Caki2 (cell line): ENCODE measurements at regions of chr22 and their contacts with region 1.

Region 1: DNA sequence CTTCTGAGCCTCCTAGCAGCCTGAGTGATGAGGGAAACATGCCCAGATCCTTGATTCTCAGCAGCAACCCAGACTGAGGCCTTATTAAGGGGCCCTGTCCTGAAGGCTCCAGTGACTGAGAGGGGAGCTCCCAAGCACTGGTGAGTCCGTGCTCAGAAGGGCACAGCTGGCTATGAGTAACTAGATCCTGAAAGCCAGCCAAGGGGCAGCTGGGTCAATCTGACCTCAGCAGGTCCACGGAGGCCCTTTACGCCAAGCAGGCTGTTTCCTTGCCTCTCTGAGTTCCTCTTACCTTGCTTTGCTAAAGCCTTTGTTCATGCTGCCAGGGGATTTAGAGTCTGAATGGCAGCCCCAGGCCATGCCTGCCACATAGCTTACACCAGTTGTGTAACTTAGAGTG is 19.3 kb upstream of the MIEF1 start:
- DNase-seq: no peak

Region 2: DNA sequence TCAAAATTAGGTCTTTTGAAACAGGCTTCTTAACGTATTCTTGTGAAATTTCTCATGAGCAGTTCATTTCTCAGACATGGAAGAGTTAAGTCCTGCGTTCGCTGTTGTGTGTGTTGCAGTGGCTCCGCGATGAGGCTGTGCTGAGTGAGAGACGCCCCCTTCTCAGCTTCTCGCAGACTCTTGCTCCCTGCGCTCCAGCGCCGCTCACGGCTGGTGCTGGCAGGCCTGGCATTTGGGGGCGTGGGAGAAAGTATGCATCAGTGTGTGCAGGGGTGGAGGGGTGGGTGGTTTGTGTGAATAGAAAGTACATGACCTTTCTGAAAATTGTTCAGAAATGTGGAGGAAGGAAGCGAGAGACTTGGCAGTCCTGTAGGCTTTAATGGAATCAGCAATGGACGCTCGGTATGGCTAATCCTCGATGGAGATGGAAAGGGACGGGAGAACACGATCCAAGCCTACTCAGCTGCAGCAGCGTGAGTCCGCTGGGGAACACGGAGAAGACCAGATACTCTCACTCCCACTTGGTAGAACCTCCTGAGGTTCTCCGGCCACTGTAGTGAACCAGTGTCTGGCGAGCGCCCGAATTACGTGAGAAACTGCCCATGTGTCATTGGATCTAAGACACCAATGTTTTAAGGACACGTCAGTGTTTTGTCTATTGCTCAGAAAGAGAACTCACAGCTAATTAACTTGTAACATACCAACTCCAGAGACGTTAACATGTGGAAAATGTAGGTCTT is 77.3 kb before region 1 on chr22:
- in situ Hi-C with region 1: loop called (anchors 10 kb)
- DNase-seq: no peak

Region 3: DNA sequence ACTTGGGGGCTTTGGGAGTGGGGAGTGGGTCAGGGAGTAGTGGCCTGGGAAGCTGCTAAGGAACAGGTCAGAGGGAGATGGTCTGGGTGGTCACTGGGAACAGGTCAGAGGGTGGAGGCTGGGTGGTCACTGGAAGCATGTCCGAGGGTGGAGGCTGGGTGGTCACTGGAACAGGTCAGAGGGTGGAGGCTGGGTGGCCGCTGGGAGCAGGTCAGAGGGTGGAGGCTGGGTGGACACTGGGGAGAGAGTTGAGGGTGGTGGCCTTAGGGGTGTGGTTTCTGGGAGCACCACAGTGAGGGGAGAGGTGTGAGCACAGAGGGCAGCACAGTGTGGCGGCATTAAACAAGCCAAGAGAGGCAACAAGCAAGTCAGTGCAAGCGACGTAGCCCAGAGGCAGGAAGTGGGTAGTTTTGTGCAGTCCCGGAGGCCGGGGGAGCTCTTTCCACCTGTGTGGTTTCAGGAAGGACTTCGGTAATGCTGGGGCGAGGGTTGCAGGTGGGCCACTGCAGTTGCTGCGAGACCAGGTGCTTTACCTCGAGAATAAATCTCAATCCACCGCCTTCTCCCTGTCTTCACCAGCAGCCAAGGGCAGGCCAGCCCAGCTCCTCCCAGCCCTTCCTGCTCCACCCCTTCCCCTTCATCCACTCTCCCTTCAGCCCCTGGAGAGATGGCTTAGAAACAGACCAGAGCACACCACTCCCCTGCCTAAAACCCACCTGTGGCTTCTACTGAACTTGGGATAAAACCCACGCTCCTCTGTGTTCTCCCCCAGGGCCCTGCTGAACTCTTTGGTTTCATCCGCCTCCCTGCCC is 84.6 kb after region 1 on chr22:
- in situ Hi-C with region 1: no loop called
- DNase-seq: no peak

Region 4: DNA sequence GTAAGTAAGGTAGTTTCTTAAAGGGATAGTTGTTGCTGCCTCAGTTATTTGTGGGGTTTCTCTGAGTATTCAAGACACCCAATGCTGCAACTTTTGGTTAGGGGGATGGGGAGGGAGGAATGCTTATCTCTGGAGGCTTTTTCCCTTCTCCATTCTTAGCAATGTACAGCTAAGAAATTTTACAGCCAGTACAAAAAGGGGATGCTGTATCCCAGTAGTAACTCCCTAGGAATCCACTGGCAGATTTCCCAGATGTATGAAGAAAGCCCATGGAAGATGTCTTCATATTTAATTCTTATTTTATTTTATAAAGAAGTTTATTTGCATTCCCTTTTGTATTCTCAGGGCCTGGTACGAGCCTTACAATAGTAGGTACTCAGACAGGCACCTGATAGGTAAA is 256.0 kb after region 1 on chr22:
- in situ Hi-C with region 1: no loop called
- DNase-seq: no peak